Activated CD8-positive, alpha-beta T cell treated with anti-CD3 and anti-CD28 coated beads for 36 hours (primary cell): ENCODE measurements at regions of chr1 and their contacts with region 1.

Region 1: DNA sequence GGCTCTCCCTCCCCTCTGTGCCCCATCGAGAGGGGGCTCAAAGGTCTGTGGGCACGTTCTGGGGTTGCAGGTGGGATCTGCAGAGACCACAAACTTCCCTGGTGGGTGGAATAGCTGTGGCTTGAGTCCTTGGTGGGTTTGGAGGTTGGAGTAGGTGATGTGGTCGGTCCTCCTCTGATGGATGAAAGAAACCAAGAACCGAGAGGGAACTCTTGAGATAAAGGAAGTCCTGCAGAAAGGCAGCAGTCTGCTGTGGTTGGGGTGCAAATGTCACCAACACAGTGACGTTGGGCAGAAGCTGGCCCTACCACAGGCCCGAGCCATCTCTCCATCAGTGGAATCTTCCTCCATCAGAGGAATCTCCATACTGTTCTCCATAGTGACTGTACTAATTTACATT is 171.8 kb downstream of the FCRL5 start:
- DNase-seq: no peak
- ATAC-seq: no peak
- H3K4me3 Mint-ChIP-seq: no peak overlapping the region
- H3K27ac Mint-ChIP-seq: no peak overlapping the region
- H3K4me1 Mint-ChIP-seq: peaks cover 3% of the 10 kb centered on the region
- H3K27me3 Mint-ChIP-seq: peaks cover 20% of the 10 kb centered on the region
- CTCF ChIP-seq: no peak

Region 2: DNA sequence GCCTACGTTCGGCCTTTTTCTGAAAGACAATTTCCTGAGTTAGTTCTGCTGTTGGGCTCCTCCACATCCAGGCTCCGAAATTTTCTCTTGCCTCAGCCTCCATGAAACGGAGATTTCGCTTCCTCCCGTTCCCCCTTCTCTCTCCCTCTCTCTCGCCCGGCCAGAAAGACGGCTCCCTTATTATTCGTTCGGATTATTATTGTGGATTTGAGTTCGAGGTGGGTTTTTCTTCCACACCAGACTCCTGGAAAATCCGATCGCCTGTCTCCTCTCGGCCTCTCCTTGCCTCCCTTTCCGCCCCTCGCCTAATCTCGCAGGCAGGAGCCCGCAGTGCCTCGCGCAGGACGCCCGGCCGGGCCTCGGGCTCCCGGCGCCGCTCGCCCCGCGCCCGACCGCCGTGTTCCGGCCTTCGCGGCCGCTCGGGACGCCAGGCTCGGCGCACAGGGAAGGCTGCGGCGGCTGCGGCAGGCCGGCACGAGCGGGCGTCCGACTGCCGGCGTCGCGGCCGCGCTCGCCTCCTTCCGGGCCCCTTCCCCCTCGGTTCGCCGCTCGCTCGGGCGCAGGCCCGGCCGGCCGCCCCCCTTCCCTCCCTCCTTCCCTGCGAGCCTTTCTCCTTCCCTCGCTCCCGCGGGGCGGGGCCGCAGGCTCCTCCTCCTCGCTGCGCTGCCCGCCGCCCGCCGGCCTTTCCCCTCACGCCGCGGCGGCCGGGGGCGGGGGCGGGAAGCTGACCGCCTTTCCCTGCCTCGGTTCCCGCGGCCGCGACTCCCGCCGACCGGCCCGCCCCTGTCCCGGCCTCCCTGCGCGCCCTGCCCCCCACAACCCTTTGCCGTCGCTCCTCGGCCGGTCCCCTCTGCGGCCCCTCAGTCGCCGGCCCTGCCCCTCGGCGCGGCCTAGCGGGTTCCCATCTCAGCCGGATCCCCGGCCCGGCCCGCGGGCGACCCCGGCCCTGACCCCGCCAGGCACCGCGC is 335.0 kb before region 1 on chr1 and contains the start of gene ARHGEF11:
- CTCF ChIA-PET with region 1: no interaction called
- POLR2A ChIA-PET with region 1: no interaction called
- intact Hi-C with region 1: no loop called
- DNase-seq: peak; percentile 16
- ATAC-seq: peak; percentile 51
- H3K4me3 Mint-ChIP-seq: peak within 1 kb of the TSS; percentile 72
- H3K27ac Mint-ChIP-seq: no peak within 1 kb of the TSS
- H3K4me1 Mint-ChIP-seq: peaks cover 14% of the 10 kb centered on the region
- H3K27me3 Mint-ChIP-seq: peaks cover 61% of the 10 kb centered on the region
- CTCF ChIP-seq: no peak
- total RNA-seq, gene ARHGEF11: 1.4 to 1.8 TPM

Region 3: GRCh38 chr1:157482174-157482573 is 101.7 kb after region 1 on chr1:
- CTCF ChIA-PET with region 1: interaction called, 14 read pairs
- POLR2A ChIA-PET with region 1: no interaction called
- intact Hi-C with region 1: no loop called
- DNase-seq: no peak
- ATAC-seq: no peak
- H3K4me3 Mint-ChIP-seq: no peak overlapping the region
- H3K27ac Mint-ChIP-seq: no peak overlapping the region
- H3K4me1 Mint-ChIP-seq: no peaks in the 10 kb centered on the region
- H3K27me3 Mint-ChIP-seq: peaks cover 6% of the 10 kb centered on the region
- CTCF ChIP-seq: no peak

Region 4: DNA sequence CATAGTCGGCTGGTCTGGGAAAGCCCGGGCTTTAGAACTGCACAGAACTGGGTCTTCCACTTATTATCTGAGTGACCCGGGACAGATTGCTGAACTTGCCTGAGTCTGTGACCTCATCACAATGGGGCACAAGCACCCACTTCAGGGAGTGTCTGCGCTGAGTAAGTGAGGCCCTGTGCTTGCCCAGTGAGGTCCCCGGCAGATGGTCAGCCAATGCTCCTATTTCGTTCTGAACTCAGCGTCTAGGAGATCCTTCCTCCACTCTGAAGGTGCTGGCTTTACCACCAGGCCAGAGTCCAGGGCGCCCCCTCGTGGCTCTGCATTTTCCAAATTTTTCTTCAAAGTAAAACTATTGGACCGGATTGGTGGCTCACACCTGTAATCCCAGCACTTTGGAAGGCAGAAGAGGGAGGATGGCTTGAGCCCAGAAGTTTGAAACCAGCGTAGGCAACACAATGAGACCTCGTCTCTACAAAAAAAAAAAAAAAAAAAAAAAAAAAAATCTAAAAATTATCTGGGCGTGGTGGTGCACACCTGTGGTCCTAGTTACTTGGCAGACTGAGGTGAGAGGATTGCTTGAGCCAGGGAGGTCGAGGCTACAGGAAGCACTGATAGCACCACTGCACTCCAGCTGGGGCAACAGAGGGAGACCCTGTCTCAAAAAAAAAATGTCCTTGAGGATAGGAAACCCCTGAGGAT is 110.1 kb after region 1 on chr1:
- CTCF ChIA-PET with region 1: interaction called, 9 read pairs
- POLR2A ChIA-PET with region 1: no interaction called
- intact Hi-C with region 1: loop called (anchors 2 kb)
- DNase-seq: peak; percentile 85
- ATAC-seq: peak; percentile 53
- H3K4me3 Mint-ChIP-seq: no peak overlapping the region
- H3K27ac Mint-ChIP-seq: no peak overlapping the region
- H3K4me1 Mint-ChIP-seq: no peaks in the 10 kb centered on the region
- H3K27me3 Mint-ChIP-seq: peaks cover 14% of the 10 kb centered on the region
- CTCF ChIP-seq: peak; percentile 71